ENCODE measurements at regions of chr12 and their contacts with region 1.

Region 1: GRCh38 chr12:57005980-57006808 is at the start of gene ZBTB39:
- DNase-seq: peak in 1 of 2 experiments; percentile 70
- H3K4me3 ChIP-seq: peak within 1 kb of the TSS; percentile 62
- H3K27ac ChIP-seq: no peak within 1 kb of the TSS
- H3K4me1 ChIP-seq: peaks cover 11% of the 10 kb centered on the region
- H3K27me3 ChIP-seq: no peaks in the 10 kb centered on the region
- CTCF ChIP-seq: peak; percentile 68; the same call in 1 of the 2 replicates
- total RNA-seq, gene ZBTB39: 6.5 and 7.6 TPM in 2 replicates

Region 2: GRCh38 chr12:56521590-56522371 is 484.4 kb before region 1 on chr12 and contains the start of gene RBMS2:
- CTCF ChIA-PET with region 1: no interaction called
- POLR2A ChIA-PET with region 1: no interaction called
- intact Hi-C with region 1: loop called (anchors 10 kb)
- DNase-seq: peak; percentile 76 to 82
- H3K4me3 ChIP-seq: peak within 1 kb of the TSS; percentile 80
- H3K27ac ChIP-seq: peak within 1 kb of the TSS; percentile 95
- H3K4me1 ChIP-seq: peaks cover 76% of the 10 kb centered on the region
- H3K27me3 ChIP-seq: no peaks in the 10 kb centered on the region
- CTCF ChIP-seq: no peak
- total RNA-seq, gene RBMS2: 44.7 and 81.8 TPM in 2 replicates

Region 3: GRCh38 chr12:56751712-56752598 is 254.2 kb before region 1 on chr12 and contains the start of gene PRIM1:
- CTCF ChIA-PET with region 1: no interaction called
- POLR2A ChIA-PET with region 1: no interaction called
- intact Hi-C with region 1: loop called (anchors 2 kb)
- DNase-seq: peak; percentile 71 to 85
- H3K4me3 ChIP-seq: peak within 1 kb of the TSS; percentile 66
- H3K27ac ChIP-seq: peak within 1 kb of the TSS; percentile 21
- H3K4me1 ChIP-seq: peaks cover 8% of the 10 kb centered on the region; the same call in 1 of the 2 replicates
- H3K27me3 ChIP-seq: no peaks in the 10 kb centered on the region
- CTCF ChIP-seq: peak; percentile 58
- total RNA-seq, gene PRIM1: 27.2 and 35.8 TPM in 2 replicates

Region 4: GRCh38 chr12:57016318-57016717 is 10.1 kb after region 1 on chr12 and contains the start of gene TAC3:
- CTCF ChIA-PET with region 1: interaction called, 16 read pairs
- POLR2A ChIA-PET with region 1: no interaction called
- intact Hi-C with region 1: no loop called
- DNase-seq: no peak
- H3K4me3 ChIP-seq: no peak within 1 kb of the TSS
- H3K27ac ChIP-seq: no peak within 1 kb of the TSS
- H3K4me1 ChIP-seq: peaks cover 10% of the 10 kb centered on the region
- H3K27me3 ChIP-seq: peaks cover 48% of the 10 kb centered on the region
- CTCF ChIP-seq: no peak
- total RNA-seq, gene TAC3: not detected in 2 replicates

Region 5: DNA sequence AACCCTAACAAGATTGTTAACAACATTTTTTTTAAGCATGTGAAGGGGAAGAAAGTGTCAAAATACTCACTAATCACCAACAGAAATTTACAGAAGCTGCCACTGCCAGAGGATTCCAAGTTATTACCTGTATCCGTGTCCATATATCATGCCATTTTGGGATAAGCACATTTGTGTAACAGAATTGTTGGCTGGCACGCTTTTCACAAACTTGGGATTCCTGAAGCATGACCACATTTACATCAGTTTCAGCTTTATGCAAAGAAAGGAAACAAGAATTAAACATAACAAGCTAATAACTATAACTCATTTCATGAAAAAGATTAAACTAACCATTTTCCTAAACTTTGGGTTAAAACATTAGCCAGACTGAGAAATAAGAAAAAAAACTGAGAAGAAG is 66.5 kb after region 1 on chr12:
- CTCF ChIA-PET with region 1: no interaction called
- POLR2A ChIA-PET with region 1: no interaction called
- intact Hi-C with region 1: no loop called
- DNase-seq: no peak
- H3K4me3 ChIP-seq: no peak overlapping the region
- H3K27ac ChIP-seq: no peak overlapping the region
- H3K4me1 ChIP-seq: peaks cover 5% of the 10 kb centered on the region
- H3K27me3 ChIP-seq: no peaks in the 10 kb centered on the region
- CTCF ChIP-seq: no peak

Region 6: GRCh38 chr12:57088459-57089248 is 82.5 kb after region 1 on chr12 and contains the start of gene NAB2:
- CTCF ChIA-PET with region 1: no interaction called
- POLR2A ChIA-PET with region 1: no interaction called
- intact Hi-C with region 1: no loop called
- DNase-seq: peak; percentile 82 to 95
- H3K4me3 ChIP-seq: peak within 1 kb of the TSS; percentile 94
- H3K27ac ChIP-seq: peak within 1 kb of the TSS; percentile 91
- H3K4me1 ChIP-seq: peaks cover 5% of the 10 kb centered on the region; the same call in 1 of the 2 replicates
- H3K27me3 ChIP-seq: no peaks in the 10 kb centered on the region
- CTCF ChIP-seq: no peak
- total RNA-seq, gene NAB2: 13.8 and 20.2 TPM in 2 replicates

Region 7: GRCh38 chr12:57182921-57183790 is 177.0 kb after region 1 on chr12:
- CTCF ChIA-PET with region 1: no interaction called
- POLR2A ChIA-PET with region 1: no interaction called
- intact Hi-C with region 1: loop called (anchors 2 kb)
- DNase-seq: peak; percentile 56 to 82
- H3K4me3 ChIP-seq: no peak overlapping the region
- H3K27ac ChIP-seq: no peak overlapping the region
- H3K4me1 ChIP-seq: no peaks in the 10 kb centered on the region
- H3K27me3 ChIP-seq: no peaks in the 10 kb centered on the region
- CTCF ChIP-seq: peak; percentile 92

Region 8: DNA sequence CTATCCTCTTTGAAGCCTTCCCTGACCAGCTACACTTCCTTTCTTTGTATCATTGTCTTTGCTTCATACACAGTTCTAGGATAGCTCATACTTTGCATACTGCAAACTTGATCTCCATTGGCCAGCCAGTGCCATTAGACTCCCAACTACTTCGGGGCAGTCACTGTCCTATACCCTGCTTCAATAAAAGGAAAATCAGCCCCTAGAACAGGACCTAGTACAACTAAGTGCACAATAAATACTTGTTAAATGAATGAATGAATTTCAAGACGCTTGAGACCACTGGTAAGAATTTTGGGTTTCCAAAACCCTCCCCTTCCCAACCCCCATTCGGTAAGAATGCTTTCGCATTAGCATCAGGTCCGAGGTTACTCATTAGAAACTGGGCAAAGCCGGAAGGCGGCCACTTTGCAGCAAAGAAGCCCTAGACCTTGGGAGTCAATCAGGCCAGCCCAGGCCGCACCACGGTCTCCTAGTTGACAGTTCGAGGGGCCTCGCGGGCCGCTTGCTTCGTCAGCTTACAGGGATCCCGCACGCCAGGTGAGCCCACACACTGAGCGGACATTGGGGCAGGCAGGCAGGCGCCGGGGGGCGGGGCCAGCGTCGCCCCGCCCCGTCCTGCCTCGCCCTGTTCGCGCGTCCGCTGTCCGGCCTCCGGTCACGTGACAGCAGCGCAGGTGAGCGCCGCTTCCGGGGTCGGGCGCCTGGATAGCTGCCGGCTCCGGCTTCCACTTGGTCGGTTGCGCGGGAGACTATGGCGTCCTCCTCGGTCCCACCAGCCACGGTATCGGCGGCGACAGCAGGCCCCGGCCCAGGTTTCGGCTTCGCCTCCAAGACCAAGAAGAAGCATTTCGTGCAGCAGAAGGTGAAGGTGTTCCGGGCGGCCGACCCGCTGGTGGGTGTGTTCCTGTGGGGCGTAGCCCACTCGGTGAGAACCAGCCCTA is 584.6 kb after region 1 on chr12 and contains the start of gene PIP4K2C:
- CTCF ChIA-PET with region 1: interaction called, 17 read pairs
- POLR2A ChIA-PET with region 1: no interaction called
- intact Hi-C with region 1: no loop called
- DNase-seq: peak; percentile 76 to 86
- H3K4me3 ChIP-seq: peak within 1 kb of the TSS; percentile 97
- H3K27ac ChIP-seq: no peak within 1 kb of the TSS
- H3K4me1 ChIP-seq: peaks cover 15% of the 10 kb centered on the region
- H3K27me3 ChIP-seq: peaks cover 16% of the 10 kb centered on the region
- CTCF ChIP-seq: no peak
- total RNA-seq, gene PIP4K2C: 47.7 and 48.7 TPM in 2 replicates